Activated CD4-positive, alpha-beta memory T cell treated with anti-CD3 and anti-CD28 coated beads for 36 hours (primary cell): ENCODE measurements at regions of chr12 and their contacts with region 1.

Region 1: DNA sequence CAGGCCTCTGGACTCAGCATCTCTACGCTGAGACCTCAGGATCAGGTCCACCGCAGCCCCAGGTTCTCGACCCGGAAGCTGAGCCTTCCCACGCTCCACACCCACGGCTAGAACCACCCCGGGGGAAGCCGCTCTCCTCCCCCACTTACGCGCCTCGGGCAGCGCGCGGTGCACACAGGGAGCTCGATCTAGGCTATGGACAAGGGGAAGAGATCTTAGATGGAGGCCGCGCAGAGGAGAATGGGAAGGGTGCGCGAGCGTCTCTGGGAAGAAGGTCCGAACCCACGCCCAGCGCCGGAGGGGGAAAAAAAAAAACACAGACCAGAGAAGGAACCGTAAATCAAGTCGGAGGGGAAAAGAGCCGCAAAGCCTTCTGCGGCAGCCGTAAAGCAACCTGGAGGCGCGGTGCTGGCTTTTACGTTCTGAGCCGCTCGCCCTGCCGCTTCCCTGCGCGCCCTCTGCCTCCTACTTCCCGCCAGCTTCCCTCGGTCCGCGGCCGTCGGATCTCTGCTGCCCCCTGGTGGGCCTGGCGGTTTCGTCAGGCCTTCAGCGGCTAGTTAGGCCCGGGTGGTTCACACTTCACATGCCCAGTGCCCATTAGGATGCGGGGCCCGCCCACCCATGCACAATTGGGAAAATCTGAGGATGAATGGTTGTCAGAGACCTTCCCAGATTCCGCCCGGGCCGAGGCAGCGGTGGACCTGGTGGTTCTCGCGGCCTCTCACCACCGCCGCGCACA is at the start of gene RAD52:
- DNase-seq: peak; percentile 98
- H3K4me3 Mint-ChIP-seq: peak within 1 kb of the TSS; percentile 97
- H3K27ac Mint-ChIP-seq: peak within 1 kb of the TSS; percentile 91
- H3K4me1 Mint-ChIP-seq: peaks cover 30% of the 10 kb centered on the region
- H3K27me3 Mint-ChIP-seq: no peaks in the 10 kb centered on the region
- total RNA-seq, gene RAD52: 9.5 to 14.5 TPM

Region 2: GRCh38 chr12:569803-570434 is 379.7 kb before region 1 on chr12:
- CTCF ChIA-PET with region 1: interaction called, 21 read pairs
- POLR2A ChIA-PET with region 1: interaction called, 4 read pairs
- intact Hi-C with region 1: loop called (anchors 2 kb)
- DNase-seq: peak; percentile 90
- H3K4me3 Mint-ChIP-seq: peak overlapping the region; percentile 79
- H3K27ac Mint-ChIP-seq: no peak overlapping the region
- H3K4me1 Mint-ChIP-seq: peaks cover 48% of the 10 kb centered on the region
- H3K27me3 Mint-ChIP-seq: no peaks in the 10 kb centered on the region

Region 3: GRCh38 chr12:662566-663292 is 286.9 kb before region 1 on chr12:
- CTCF ChIA-PET with region 1: interaction called, 3 read pairs
- POLR2A ChIA-PET with region 1: no interaction called
- intact Hi-C with region 1: loop called (anchors 5 kb)
- DNase-seq: peak; percentile 4
- H3K4me3 Mint-ChIP-seq: peak overlapping the region; percentile 52
- H3K27ac Mint-ChIP-seq: peak overlapping the region; percentile 65
- H3K4me1 Mint-ChIP-seq: peaks cover 50% of the 10 kb centered on the region
- H3K27me3 Mint-ChIP-seq: no peaks in the 10 kb centered on the region

Region 4: DNA sequence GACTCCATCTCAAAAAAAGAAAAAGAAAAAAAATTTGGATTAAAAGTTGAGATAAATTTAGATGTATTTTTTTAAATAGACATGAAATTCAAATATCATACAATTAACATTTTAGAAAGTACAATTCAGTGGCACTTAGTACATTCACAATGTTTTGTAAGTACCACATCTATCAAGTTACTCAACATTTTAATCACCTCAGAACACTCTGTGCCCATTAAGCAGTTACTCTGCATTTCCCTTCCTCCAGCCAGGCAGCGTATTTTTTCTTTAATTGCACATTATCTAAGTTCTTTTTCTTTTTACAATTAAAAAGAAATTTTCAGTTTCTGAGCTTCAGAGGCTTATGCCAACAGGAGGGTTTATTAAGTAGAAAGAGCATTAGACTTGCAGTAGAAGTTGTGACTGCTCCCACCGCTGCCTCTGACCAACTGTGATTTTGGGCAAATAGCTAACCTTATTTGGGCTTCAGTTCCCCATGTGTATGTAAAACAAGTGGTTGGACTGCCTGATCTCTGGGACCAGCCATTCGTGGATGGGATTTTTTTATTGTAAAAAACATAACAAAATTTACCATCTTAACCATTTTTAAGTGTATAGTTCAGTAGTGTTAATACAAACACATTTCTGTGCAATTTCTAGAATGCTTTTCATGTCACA is 131.6 kb before region 1 on chr12:
- CTCF ChIA-PET with region 1: interaction called, 19 read pairs
- POLR2A ChIA-PET with region 1: interaction called, 5 read pairs
- intact Hi-C with region 1: loop called (anchors 1 kb)
- DNase-seq: no peak
- H3K4me3 Mint-ChIP-seq: no peak overlapping the region
- H3K27ac Mint-ChIP-seq: no peak overlapping the region
- H3K4me1 Mint-ChIP-seq: peaks cover 59% of the 10 kb centered on the region
- H3K27me3 Mint-ChIP-seq: no peaks in the 10 kb centered on the region

Region 5: DNA sequence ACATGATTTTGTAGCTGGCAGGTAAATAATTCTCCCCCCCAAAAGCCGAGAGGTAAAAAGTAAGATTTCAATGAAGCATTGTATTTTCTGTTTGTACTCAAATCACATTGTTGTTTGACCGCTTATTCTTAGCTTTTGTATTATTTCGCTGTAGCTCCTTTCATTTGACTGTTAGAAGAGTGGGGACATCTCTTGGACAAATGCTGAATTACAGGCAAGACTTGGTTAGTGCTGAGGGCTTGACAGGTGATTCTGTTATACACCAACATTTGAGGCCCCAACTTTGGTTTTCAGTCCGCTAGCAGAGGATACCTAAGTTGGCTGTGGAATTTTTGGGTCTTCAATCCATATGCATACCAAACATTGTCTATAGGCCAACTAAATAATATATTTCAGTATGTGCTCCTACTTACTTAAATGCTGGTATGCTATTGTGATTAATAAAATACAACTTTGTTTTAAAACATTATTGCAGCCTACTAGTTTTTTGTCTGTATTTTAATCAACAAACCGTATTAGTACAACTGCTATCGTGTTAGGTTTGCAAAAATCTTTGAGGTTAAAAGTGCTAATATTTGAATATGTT is 143.6 kb after region 1 on chr12:
- CTCF ChIA-PET with region 1: interaction called, 11 read pairs
- POLR2A ChIA-PET with region 1: no interaction called
- intact Hi-C with region 1: loop called (anchors 5 kb)
- DNase-seq: peak; percentile 18
- H3K4me3 Mint-ChIP-seq: no peak overlapping the region
- H3K27ac Mint-ChIP-seq: no peak overlapping the region
- H3K4me1 Mint-ChIP-seq: peaks cover 11% of the 10 kb centered on the region
- H3K27me3 Mint-ChIP-seq: no peaks in the 10 kb centered on the region

Region 6: GRCh38 chr12:1583421-1584078 is 633.9 kb after region 1 on chr12:
- CTCF ChIA-PET with region 1: interaction called, 11 read pairs
- POLR2A ChIA-PET with region 1: no interaction called
- intact Hi-C with region 1: no loop called
- DNase-seq: peak; percentile 75
- H3K4me3 Mint-ChIP-seq: no peak overlapping the region
- H3K27ac Mint-ChIP-seq: no peak overlapping the region
- H3K4me1 Mint-ChIP-seq: peaks cover 17% of the 10 kb centered on the region
- H3K27me3 Mint-ChIP-seq: no peaks in the 10 kb centered on the region